CD4-positive, alpha-beta T cell (primary cell): ENCODE measurements at regions of chr18 and their contacts with region 1.

Region 1: DNA sequence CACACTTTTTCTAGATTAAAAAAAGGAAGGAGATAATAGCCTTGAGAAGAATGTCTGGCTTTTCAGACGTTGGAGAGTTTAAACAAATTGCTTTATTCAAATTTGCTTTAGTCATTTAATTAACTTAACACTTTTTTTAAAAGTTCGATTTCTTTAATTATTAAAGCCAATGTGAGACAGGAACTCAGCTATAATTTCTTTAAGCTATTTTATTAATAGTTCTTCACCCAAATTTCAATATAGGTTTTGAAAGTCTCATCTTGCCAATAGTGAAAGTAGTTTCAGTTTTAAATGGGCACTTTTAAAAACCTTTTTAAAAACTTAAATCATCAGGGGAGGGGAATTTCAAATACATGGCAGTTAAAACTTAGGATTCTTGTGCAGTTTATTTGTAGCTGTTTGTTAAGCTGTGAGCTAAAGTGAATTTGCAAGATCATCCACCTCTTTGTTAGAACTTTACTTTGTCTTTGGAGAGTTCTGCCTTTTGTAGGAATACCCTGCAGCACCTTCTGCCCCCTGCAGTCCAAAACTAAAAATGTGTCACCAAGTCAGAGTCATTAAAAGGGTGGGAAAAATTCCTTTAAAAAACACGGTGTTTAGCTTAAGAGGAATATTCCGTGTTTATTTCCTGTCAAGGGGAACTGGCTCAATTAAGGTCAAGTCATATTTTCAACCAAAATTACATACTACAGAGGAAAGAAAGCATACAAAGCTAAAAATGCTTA is 4.6 kb downstream of the TGIF1 start:
- DNase-seq: peak in 7 of 14 experiments; percentile 13 to 78 (median 58)
- ATAC-seq: no peak
- H3K4me3 ChIP-seq: peak overlapping the region; percentile 90
- H3K4me3 Mint-ChIP-seq: peak overlapping the region; percentile 98
- H3K27ac ChIP-seq: peak overlapping the region; percentile 75 to 98
- H3K27ac Mint-ChIP-seq: peak overlapping the region; percentile 99
- H3K4me1 ChIP-seq: peaks cover 50% of the 10 kb centered on the region
- H3K4me1 Mint-ChIP-seq: peaks cover 73% of the 10 kb centered on the region
- H3K27me3 ChIP-seq: no peaks in the 10 kb centered on the region
- H3K27me3 Mint-ChIP-seq: no peaks in the 10 kb centered on the region
- CTCF ChIP-seq: peak; percentile 91

Region 2: GRCh38 chr18:3281456-3282400 is 172.8 kb before region 1 on chr18:
- CTCF ChIA-PET with region 1: interaction called, 3 read pairs
- POLR2A ChIA-PET with region 1: no interaction called
- intact Hi-C with region 1: loop called (anchors 1 to 5 kb)
- DNase-seq: peak in 3 of 14 experiments; percentile 79 to 83 (median 83)
- ATAC-seq: peak; percentile 87
- H3K4me3 ChIP-seq: no peak overlapping the region
- H3K4me3 Mint-ChIP-seq: no peak overlapping the region
- H3K27ac ChIP-seq: no peak overlapping the region
- H3K27ac Mint-ChIP-seq: no peak overlapping the region
- H3K4me1 ChIP-seq: no peaks in the 10 kb centered on the region
- H3K4me1 Mint-ChIP-seq: no peaks in the 10 kb centered on the region
- H3K27me3 ChIP-seq: no peaks in the 10 kb centered on the region
- H3K27me3 Mint-ChIP-seq: no peaks in the 10 kb centered on the region
- CTCF ChIP-seq: peak; percentile 82

Region 3: GRCh38 chr18:3321133-3321812 is 133.3 kb before region 1 on chr18:
- CTCF ChIA-PET with region 1: interaction called, 7 read pairs
- POLR2A ChIA-PET with region 1: interaction called, 3 read pairs
- intact Hi-C with region 1: loop called (anchors 2 to 5 kb)
- DNase-seq: no peak
- ATAC-seq: no peak
- H3K4me3 ChIP-seq: no peak overlapping the region
- H3K4me3 Mint-ChIP-seq: no peak overlapping the region
- H3K27ac ChIP-seq: no peak overlapping the region
- H3K27ac Mint-ChIP-seq: no peak overlapping the region
- H3K4me1 ChIP-seq: no peaks in the 10 kb centered on the region
- H3K4me1 Mint-ChIP-seq: no peaks in the 10 kb centered on the region
- H3K27me3 ChIP-seq: no peaks in the 10 kb centered on the region
- H3K27me3 Mint-ChIP-seq: peaks cover 12% of the 10 kb centered on the region
- CTCF ChIP-seq: no peak

Region 4: DNA sequence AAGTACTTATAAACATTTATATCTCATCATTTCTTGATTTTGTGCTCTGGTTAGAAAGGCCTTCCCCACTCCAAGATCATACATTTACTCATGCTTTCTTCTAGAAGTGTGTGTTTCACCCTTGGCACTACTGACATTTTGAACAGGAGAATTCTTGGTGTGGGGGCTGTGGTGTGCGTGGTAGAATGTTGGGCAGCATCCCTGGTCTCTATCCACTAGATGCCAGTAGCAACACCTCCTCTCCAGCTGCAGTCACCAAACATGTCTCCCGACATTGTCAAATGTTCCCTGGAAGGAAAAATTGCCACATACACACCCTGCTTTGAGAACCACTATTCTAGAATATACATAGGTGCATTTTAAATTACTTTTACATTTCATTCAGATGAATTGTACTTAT is 13.2 kb before region 1 on chr18:
- CTCF ChIA-PET with region 1: interaction called, 12 read pairs
- POLR2A ChIA-PET with region 1: interaction called, 11 read pairs
- intact Hi-C with region 1: loop called (anchors 1 to 2 kb)
- DNase-seq: peak in 5 of 14 experiments; percentile 2 to 69 (median 49)
- ATAC-seq: peak; percentile 46
- H3K4me3 ChIP-seq: no peak overlapping the region
- H3K4me3 Mint-ChIP-seq: no peak overlapping the region
- H3K27ac ChIP-seq: no peak overlapping the region
- H3K27ac Mint-ChIP-seq: no peak overlapping the region
- H3K4me1 ChIP-seq: no peaks in the 10 kb centered on the region
- H3K4me1 Mint-ChIP-seq: peaks cover 4% of the 10 kb centered on the region
- H3K27me3 ChIP-seq: no peaks in the 10 kb centered on the region
- H3K27me3 Mint-ChIP-seq: no peaks in the 10 kb centered on the region
- CTCF ChIP-seq: peak; percentile 51

Region 5: DNA sequence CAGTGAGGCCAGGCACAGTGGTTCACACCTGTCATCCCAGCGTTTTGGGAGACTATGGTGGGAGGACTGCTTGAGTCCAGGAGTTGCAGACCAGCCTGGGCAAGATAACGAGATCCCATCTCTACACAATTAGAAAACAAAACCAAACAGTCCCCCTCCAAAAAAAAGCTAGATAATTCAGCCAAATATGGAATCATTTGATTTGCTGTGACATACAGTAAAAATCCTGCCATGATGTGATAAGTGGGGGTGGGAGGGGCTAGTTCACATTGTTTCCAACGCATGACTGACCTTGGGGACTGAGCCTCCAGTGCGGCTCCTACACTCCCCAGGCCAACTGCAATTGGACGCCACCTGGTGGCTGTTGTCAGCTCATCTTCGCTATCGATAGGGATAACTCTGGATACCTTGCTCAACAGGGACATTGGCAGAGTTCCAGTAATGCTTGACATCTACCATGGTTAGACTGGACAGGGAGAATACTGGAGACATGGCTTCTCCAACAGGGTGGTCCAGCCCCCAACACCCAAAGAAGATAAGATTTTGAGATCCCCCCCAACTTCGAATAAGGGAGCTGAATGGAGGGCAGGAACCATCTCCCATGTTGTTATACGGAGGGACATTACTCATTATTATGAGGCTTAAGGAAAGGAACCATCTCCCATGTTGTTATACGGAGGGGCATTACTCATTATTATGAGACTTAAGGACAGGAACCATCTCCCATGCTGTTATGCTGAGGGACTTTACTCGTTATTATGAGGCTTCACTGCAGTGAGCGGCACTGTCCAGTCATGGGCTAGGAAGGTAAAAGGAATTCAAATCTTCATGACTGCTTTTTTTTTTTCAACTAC is 131.4 kb after region 1 on chr18:
- CTCF ChIA-PET with region 1: interaction called, 17 read pairs
- POLR2A ChIA-PET with region 1: interaction called, 14 read pairs
- intact Hi-C with region 1: no loop called
- DNase-seq: peak; percentile 48 to 85 (median 60)
- ATAC-seq: peak; percentile 86
- H3K4me3 ChIP-seq: no peak overlapping the region
- H3K4me3 Mint-ChIP-seq: no peak overlapping the region
- H3K27ac ChIP-seq: no peak overlapping the region
- H3K27ac Mint-ChIP-seq: no peak overlapping the region
- H3K4me1 ChIP-seq: peaks cover 11% of the 10 kb centered on the region
- H3K4me1 Mint-ChIP-seq: peaks cover 12% of the 10 kb centered on the region
- H3K27me3 ChIP-seq: no peaks in the 10 kb centered on the region
- H3K27me3 Mint-ChIP-seq: no peaks in the 10 kb centered on the region
- CTCF ChIP-seq: peak; percentile 77